ENCODE measurements at regions of chr3 and their contacts with region 1.

Region 1: DNA sequence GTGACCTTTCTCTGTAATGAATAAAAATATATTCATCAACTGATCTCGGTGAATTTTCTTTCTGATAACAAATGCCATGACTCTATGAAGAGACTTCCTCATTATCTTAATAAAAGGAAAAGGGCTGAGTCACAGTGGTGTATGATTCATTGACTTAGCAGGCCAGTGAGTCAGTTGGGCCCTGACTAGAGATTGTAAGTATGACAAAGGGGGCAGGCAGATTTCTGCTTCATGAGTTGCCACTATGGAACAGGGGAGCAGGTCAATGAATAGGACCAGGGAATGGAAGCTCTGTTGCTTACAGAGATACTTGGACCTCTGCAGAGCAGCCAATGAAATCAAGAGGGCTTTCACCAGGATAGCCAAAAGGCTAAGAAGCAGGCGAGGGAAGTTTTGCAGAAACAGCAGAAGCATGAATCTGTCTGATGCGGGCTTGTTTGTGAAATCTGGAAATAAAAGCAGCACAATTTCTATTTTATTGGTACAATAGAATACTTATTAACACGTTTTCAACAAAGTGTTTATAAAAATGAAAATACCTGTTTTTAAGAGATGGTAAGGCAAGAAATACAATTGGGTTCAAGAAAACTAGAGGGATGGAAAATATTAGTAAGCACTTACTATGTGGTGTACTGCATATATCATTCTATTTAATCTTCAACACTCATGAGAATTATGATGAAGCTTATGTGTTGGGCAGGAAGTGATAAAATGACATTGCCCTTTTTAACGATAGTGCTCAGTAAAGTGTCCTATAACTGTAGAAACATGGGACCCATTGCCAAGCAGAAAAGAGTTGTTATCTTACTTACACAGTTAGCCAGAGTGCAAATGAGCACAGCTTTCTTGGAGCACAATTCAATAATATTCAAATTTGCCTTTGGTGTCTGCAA is 169.8 kb upstream of the MYRIP start:
- DNase-seq: peak; percentile 94
- ATAC-seq: peak; percentile 90
- H3K4me3 ChIP-seq: no peak overlapping the region
- H3K27ac ChIP-seq: 0 out of 2 replicates have a peak overlapping the region, but pooled peaks have one; percentile 28
- H3K4me1 ChIP-seq: peaks cover 12% of the 10 kb centered on the region
- H3K27me3 ChIP-seq: peaks cover 13% of the 10 kb centered on the region
- CTCF ChIP-seq: no peak

Region 2: DNA sequence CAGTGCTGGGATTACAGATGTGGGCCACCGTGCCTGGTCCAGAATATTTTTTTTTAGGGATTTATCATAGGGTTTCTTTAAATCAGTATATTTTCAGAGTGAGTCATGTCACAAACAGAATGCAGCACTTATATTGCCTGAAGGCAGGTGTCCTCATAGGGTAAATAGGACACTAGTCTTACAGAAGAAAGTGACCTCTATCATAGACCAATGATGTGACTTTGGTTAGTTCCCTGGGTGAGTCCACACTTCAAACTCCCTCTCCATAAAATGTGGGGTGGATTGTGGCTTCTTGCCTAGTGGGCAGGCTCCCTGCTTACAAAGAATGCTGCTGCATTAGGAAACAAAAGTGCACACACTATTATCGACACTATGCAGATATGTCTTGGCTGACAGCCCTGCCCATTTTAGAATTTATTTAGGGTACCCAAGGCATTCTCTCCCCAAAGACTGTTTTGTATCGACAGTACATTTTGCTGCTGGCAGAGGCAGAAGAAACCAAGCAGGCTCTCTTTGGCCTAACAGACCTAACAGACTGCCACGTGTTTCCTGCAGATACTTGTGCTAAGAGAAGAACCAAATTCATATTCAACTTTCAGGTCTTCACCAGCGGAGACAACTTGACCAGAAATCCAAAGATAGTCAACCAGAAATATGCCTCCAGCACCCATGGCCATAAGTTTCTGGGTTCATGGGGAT is 47.1 kb before region 1 on chr3:
- CTCF ChIA-PET with region 1: no interaction called
- POLR2A ChIA-PET with region 1: no interaction called
- intact Hi-C with region 1: loop called (anchors 2 kb)
- DNase-seq: peak; percentile 35
- ATAC-seq: no peak
- H3K4me3 ChIP-seq: no peak overlapping the region
- H3K27ac ChIP-seq: no peak overlapping the region
- H3K4me1 ChIP-seq: no peaks in the 10 kb centered on the region
- H3K27me3 ChIP-seq: peaks cover 16% of the 10 kb centered on the region
- CTCF ChIP-seq: no peak

Region 3: DNA sequence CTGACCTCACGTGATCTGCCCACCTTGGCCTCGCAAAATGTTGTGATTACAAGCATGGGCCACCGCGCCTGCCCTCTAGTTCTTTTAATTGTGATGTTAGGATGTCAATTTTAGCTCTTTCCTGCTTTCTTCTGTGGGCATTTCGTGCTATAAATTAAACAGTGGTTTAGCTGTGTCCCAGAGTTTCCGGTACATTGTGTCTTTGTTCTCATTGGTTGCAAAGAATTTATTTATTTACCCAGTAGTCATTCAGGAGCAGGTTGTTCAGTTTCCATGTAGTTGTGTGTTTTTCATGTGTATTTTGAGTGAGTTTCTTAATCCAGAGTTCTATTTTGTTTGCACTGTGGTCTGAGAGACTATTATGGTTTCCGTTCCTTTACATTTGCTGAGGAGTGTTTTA is 199.9 kb after region 1 on chr3:
- CTCF ChIA-PET with region 1: no interaction called
- POLR2A ChIA-PET with region 1: no interaction called
- intact Hi-C with region 1: no loop called
- DNase-seq: no peak
- ATAC-seq: no peak
- H3K4me3 ChIP-seq: no peak overlapping the region
- H3K27ac ChIP-seq: no peak overlapping the region
- H3K4me1 ChIP-seq: no peaks in the 10 kb centered on the region
- H3K27me3 ChIP-seq: no peaks in the 10 kb centered on the region
- CTCF ChIP-seq: no peak